Pancreas (tissue), 10 donors: ENCODE measurements at regions of chr5 and their contacts with region 1.

Region 1: DNA sequence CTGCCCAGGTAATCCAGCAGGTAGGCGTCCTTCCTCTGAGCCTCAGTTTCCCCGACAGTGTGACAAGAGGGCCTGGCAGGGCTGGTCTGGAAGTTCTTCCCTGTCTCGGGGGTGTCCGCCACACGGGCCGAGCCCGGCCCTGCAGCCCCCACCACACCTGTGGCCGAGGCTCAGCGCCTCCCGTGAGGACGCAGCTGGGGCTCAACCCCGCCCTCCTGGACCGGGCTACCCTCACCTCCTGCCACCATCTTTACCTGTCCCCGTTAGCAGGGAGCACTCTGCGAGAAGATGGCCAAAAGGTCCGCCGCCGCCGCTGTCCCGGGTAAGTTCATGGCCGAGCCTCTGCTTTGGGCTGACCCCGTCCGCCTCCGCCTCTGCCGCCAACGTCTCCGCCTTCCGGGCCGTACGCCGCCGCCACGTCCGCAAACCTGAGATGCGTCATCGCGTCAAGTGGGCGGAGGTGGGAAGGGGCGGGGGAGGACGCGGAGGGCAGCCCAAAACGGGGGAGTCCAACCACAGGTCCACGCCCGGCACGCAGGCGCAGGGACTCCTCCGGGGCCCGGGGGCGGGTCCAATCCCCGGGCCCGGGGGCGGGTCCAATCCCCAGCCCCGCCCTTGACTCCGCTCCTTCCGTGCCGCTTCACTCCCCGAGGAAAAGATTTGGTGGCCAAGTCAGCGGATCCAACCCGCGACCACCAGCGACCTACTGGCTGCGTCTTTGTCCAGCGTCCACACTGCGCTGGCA is at the start of gene LYSMD3:
- DNase-seq: peak; percentile 97 to 99 (median 98)
- ATAC-seq: peak; percentile 97 to 99 (median 97)
- H3K4me3 ChIP-seq: peak within 1 kb of the TSS; percentile 75 to 89 (median 84)
- H3K27ac ChIP-seq: peak within 1 kb of the TSS; percentile 78 to 94 (median 82)
- H3K4me1 ChIP-seq: peaks cover 9 to 29% (median 17%) of the 10 kb centered on the region in 3 donors
- H3K27me3 ChIP-seq: no peaks in the 10 kb centered on the region
- CTCF ChIP-seq: no peak
- total RNA-seq, gene LYSMD3: 6.0 to 11.7 (median 7.8) TPM

Region 2: DNA sequence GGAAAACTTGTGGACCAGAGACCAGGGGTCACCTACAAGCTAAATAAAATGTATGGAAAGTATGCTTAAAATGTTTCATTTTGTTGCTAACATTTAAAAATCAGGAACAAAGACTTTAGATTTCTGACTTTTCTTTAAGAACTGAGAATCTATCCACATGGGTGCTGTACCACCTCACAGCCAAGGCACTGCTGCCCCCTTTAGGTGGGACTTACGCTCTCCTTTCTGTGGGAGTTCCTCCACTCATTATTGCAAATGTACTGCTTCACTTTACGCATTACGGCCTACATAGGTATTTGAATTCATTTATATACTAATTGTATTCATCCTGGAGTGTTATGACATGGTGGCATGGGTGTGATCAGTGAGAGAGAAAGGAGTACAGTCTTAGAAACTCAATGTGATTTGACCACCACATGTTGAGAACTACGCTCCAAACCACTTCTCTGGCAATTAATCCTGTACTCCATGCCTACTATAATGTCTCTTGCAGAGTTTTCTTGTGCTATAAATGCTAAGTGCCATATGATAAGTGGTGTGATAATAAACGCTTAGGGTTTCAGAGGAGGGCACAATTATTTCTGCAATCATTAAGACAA is 95.2 kb before region 1 on chr5:
- intact Hi-C with region 1: loop called in 1 of 3 experiments (anchors 10 kb)
- DNase-seq: peak in 1 of 6 donors; percentile 30
- ATAC-seq: peak in 3 of 4 donors; percentile 64 to 76 (median 71)
- H3K4me3 ChIP-seq: no peak overlapping the region
- H3K27ac ChIP-seq: no peak overlapping the region
- H3K4me1 ChIP-seq: peaks cover 1 to 5% (median 3%) of the 10 kb centered on the region in 3 donors
- H3K27me3 ChIP-seq: no peaks in the 10 kb centered on the region
- CTCF ChIP-seq: peak in 3 of 4 donors; percentile 8 to 19 (median 17)

Region 3: DNA sequence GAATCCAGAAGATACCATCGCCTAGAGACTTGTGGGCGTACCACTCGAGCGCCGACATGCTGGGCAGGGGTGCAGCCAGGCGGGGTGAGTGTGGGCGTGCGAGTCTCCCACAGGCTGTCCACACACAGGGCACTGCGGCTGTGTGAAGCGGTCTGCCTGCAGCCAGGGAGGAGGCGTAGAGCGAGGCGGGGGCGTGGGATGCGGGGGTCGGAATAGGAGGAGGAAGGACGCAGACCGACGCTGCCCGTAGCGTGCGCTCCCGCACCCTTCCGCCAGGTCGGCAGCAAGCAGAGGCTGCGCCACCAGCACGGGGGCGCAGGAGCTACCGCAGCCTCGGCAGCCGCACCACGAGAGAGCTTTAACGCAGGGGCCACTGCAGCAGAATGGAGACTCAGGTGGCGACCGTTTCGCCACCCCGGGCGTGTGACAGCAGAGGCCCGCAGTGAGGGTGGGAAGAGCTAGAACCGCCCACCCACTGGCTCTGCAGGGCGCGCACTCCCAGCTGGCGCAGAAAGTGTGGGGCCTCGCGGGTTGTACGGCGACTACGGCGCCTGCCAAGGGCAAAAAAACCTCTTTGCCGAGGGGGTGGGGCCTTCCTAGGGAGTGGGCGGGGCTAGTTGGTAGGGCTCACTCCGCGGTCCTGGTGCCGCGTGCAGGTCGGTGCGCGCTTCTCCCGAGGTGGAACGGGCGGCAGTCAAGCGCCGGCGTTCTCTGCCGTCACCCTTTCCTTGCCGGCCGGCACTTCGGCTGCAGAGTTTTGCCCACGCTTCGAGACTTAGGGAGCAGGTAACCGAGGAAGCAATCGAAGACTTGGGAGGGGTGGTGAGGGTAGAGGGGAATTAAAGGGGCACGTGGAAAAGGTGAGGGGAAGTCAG is 54.9 kb before region 1 on chr5 and contains the starts of genes MBLAC2 and POLR3G:
- intact Hi-C with region 1: loop called in 1 of 3 experiments (anchors 10 kb)
- DNase-seq: peak; percentile 95 to 97 (median 96)
- ATAC-seq: peak; percentile 92 to 97 (median 94)
- H3K4me3 ChIP-seq: peak within 1 kb of the TSS; percentile 34 to 94 (median 90)
- H3K27ac ChIP-seq: peak within 1 kb of the TSS; percentile 79 to 92 (median 84)
- H3K4me1 ChIP-seq: peaks cover 11 to 14% (median 11%) of the 10 kb centered on the region in 3 donors
- H3K27me3 ChIP-seq: no peaks in the 10 kb centered on the region
- CTCF ChIP-seq: peak; percentile 32 to 45 (median 38)
- total RNA-seq, gene MBLAC2: 2.2 to 3.5 (median 3.1) TPM
- total RNA-seq, gene POLR3G: 0.60 to 1.3 (median 0.97) TPM